CD14-positive monocyte (primary cell): ENCODE measurements at regions of chr19 and their contacts with region 1.

Region 1: GRCh38 chr19:55674841-55675660 is at the start of gene EPN1:
- DNase-seq: peak; percentile 96 to 98 (median 96)
- H3K4me3 ChIP-seq: peak within 1 kb of the TSS; percentile 81 to 93 (median 83)
- H3K4me3 Mint-ChIP-seq: peak within 1 kb of the TSS; percentile 93 to 99
- H3K27ac ChIP-seq: peak within 1 kb of the TSS; percentile 71 to 87
- H3K27ac Mint-ChIP-seq: peak within 1 kb of the TSS; percentile 95 to 98 (median 96)
- H3K4me1 ChIP-seq: peaks cover 51% of the 10 kb centered on the region in 2 donors
- H3K4me1 Mint-ChIP-seq: peaks cover 57% of the 10 kb centered on the region
- H3K27me3 ChIP-seq: no peaks in the 10 kb centered on the region
- H3K27me3 Mint-ChIP-seq: no peaks in the 10 kb centered on the region
- CTCF ChIP-seq: no peak
- polyA plus RNA-seq, gene EPN1: 18.7 to 75.2 (median 19.2) TPM

Region 2: GRCh38 chr19:55624109-55625003 is 50.7 kb before region 1 on chr19 and contains the start of gene ZNF784:
- intact Hi-C with region 1: no loop called
- DNase-seq: peak; percentile 88 to 94 (median 91)
- H3K4me3 ChIP-seq: peak within 1 kb of the TSS; percentile 54 to 85 (median 63)
- H3K4me3 Mint-ChIP-seq: peak within 1 kb of the TSS; percentile 85 to 94
- H3K27ac ChIP-seq: peak within 1 kb of the TSS; percentile 78 to 86
- H3K27ac Mint-ChIP-seq: peak within 1 kb of the TSS; percentile 91 to 99 (median 98)
- H3K4me1 ChIP-seq: peaks cover 45 to 54% of the 10 kb centered on the region in 2 donors
- H3K4me1 Mint-ChIP-seq: peaks cover 40% of the 10 kb centered on the region
- H3K27me3 ChIP-seq: no peaks in the 10 kb centered on the region
- H3K27me3 Mint-ChIP-seq: peaks cover 0 to 8% (median 1%) of the 10 kb centered on the region in 3 donors
- CTCF ChIP-seq: no peak
- polyA plus RNA-seq, gene ZNF784: 1.5 to 5.5 (median 2.4) TPM

Region 3: DNA sequence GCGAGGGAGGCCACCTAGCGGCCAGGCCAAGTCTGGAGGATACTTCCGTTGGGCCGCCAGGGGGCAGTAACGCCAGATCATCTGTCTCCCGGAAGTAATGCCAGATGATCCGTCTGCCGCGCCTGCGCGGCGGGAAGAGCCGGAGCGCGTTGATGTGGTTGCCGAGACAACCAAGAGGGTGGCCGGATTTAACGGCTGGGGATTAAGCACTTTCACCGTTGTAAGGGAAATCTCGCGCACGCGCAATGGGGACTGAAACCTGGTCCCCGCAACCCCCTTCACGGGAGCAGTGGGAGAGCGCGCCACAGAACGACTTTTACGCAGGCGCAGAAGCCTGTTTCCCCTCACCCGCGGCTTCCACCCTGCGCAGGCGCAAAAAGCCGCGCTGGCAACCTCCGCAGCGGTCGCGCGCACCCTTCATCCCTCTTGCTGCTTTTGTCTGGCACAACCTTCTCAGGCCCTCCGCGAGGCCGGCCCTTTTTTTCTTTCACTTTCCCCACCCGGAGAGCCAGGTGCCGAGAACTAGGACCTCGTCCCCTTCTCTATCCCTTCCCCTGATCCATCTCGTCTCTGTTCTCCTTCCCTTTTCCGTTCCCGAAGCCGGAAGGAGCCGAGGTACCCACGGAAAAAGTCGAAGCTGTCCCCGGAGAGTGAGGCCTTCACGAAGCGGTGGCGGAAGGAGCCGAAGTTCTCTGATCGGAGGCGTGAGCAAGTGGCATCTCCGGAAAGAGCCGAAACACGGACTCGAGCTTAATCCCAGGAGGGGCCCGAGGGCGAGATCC is 21.1 kb before region 1 on chr19:
- intact Hi-C with region 1: loop called (anchors 2 kb)
- DNase-seq: peak; percentile 100
- H3K4me3 ChIP-seq: peak overlapping the region; percentile 66 to 89 (median 86)
- H3K4me3 Mint-ChIP-seq: peak overlapping the region; percentile 98 to 99
- H3K27ac ChIP-seq: peak overlapping the region; percentile 94 to 98
- H3K27ac Mint-ChIP-seq: peak overlapping the region; percentile 96 to 100 (median 100)
- H3K4me1 ChIP-seq: peaks cover 37 to 46% of the 10 kb centered on the region in 2 donors
- H3K4me1 Mint-ChIP-seq: peaks cover 34% of the 10 kb centered on the region
- H3K27me3 ChIP-seq: no peaks in the 10 kb centered on the region
- H3K27me3 Mint-ChIP-seq: peaks cover 2 to 5% (median 4%) of the 10 kb centered on the region in 3 donors
- CTCF ChIP-seq: peak; percentile 100